ENCODE measurements at regions of chr1 and their contacts with region 1.

Region 1: GRCh38 chr1:37692078-37692833 is at the start of gene CDCA8:
- DNase-seq: peak; percentile 97 to 99 (median 98)
- ATAC-seq: peak; percentile 87
- H3K4me3 ChIP-seq: peak within 1 kb of the TSS; percentile 73
- H3K4me3 Mint-ChIP-seq: peak within 1 kb of the TSS; percentile 98
- H3K27ac ChIP-seq: peak within 1 kb of the TSS in 1 of 2 donors; percentile 46
- H3K27ac Mint-ChIP-seq: peak within 1 kb of the TSS; percentile 90
- H3K4me1 ChIP-seq: peaks cover 41% of the 10 kb centered on the region
- H3K4me1 Mint-ChIP-seq: peaks cover 37% of the 10 kb centered on the region
- H3K27me3 ChIP-seq: no peaks in the 10 kb centered on the region
- H3K27me3 Mint-ChIP-seq: no peaks in the 10 kb centered on the region
- CTCF ChIP-seq: peak; percentile 63
- total RNA-seq, gene CDCA8: 0.25 to 0.36 TPM

Region 2: DNA sequence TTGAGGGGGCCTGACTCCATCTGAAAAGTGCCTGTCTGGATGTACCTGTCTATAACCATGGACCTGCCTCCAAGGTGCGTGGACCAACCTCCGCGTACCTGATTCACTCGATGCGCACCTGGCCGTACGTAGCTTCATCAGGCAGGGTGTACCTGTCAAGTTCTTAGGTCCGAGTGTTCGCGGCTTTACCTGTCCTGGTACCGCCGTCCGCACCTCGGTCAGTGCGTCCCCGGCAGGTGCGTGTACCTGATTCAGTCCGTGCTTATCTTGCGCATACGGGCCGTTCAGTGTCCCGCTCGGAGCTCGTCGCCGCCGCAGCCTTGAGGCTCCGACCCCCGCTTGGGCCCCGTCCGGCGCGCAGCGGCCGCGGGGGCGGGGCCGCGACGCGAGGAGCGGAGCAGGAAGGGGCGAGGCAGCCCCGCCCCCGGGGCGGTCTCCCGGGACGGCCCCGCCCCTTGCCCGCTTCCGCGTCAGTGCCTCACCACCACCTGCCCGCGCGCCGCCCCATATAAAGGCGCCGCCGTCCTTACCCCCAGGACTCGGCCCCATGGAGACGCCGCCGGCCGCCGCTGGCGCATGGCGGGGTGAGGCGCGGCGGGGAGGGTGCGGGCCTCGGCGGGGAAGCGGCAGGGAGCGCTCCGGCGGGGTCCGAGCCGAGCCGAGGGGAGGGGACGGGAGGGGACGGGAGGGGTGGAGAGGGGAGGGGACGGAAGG is 218.1 kb before region 1 on chr1 and contains the start of gene ZC3H12A:
- CTCF ChIA-PET with region 1: no interaction called
- POLR2A ChIA-PET with region 1: interaction called, 7 read pairs
- intact Hi-C with region 1: loop called in 1 of 2 experiments (anchors 1 kb)
- DNase-seq: peak; percentile 83 to 98 (median 93)
- ATAC-seq: peak; percentile 61
- H3K4me3 ChIP-seq: peak within 1 kb of the TSS; percentile 92
- H3K4me3 Mint-ChIP-seq: peak within 1 kb of the TSS; percentile 97
- H3K27ac ChIP-seq: peak within 1 kb of the TSS; percentile 95 to 97
- H3K27ac Mint-ChIP-seq: peak within 1 kb of the TSS; percentile 100
- H3K4me1 ChIP-seq: peaks cover 69% of the 10 kb centered on the region
- H3K4me1 Mint-ChIP-seq: peaks cover 66% of the 10 kb centered on the region
- H3K27me3 ChIP-seq: no peaks in the 10 kb centered on the region
- H3K27me3 Mint-ChIP-seq: no peaks in the 10 kb centered on the region
- CTCF ChIP-seq: no peak
- total RNA-seq, gene ZC3H12A: 164 to 165 TPM

Region 3: DNA sequence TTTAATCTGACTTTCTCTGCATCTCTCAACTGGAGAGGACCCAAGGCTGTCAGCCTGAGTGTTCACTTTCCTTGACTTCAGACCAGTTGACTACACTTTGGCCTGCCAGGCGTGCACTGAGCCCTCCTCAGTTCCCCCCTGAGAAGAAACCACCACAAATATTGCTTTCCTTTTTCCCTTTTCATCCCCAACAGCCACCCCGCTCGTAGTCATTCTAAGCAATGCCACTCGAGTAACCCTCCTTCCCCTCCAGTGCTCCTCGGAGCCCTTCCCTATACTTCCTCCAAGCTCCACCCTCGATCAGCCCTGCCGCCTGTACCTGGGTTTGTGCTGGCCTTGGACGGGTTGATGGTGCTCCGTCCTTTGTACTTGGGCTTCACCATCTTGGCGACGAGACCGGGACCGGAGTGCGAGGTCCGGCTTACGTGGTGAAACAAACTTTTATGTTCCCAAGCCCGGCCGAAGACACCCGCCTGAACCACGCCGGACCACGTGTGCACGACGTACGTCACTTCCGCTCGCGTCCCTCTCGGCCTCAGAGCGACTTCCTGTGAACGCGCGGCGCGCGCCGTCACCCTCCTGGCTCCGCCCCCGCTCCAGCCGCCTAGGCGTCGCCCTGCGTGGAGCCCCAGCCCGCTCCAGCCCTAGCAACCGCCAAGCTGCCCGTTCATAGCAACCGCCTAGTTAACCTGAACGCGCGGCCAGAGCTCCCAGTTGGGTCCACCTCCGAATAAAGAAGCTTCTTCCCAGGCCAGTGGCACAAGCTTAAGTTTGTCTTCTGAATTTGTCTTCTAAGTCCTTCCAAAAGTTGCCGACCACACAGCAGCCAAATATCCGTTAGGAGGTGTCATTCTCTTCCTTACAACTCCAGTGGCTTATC is 96.6 kb before region 1 on chr1 and contains the start of gene GNL2:
- CTCF ChIA-PET with region 1: interaction called, 3 read pairs
- POLR2A ChIA-PET with region 1: interaction called, 12 read pairs
- intact Hi-C with region 1: no loop called
- DNase-seq: peak; percentile 88 to 99 (median 96)
- ATAC-seq: peak; percentile 93
- H3K4me3 ChIP-seq: peak within 1 kb of the TSS; percentile 93
- H3K4me3 Mint-ChIP-seq: peak within 1 kb of the TSS; percentile 97
- H3K27ac ChIP-seq: peak within 1 kb of the TSS; percentile 75 to 90
- H3K27ac Mint-ChIP-seq: peak within 1 kb of the TSS; percentile 93
- H3K4me1 ChIP-seq: peaks cover 22% of the 10 kb centered on the region
- H3K4me1 Mint-ChIP-seq: peaks cover 34% of the 10 kb centered on the region
- H3K27me3 ChIP-seq: no peaks in the 10 kb centered on the region
- H3K27me3 Mint-ChIP-seq: no peaks in the 10 kb centered on the region
- CTCF ChIP-seq: no peak
- total RNA-seq, gene GNL2: 43.4 to 44.5 TPM

Region 4: GRCh38 chr1:37931361-37932158 is 239.3 kb after region 1 on chr1:
- CTCF ChIA-PET with region 1: no interaction called
- POLR2A ChIA-PET with region 1: no interaction called
- intact Hi-C with region 1: loop called in 1 of 2 experiments (anchors 5 kb)
- DNase-seq: peak; percentile 90 to 99 (median 97)
- ATAC-seq: peak; percentile 99
- H3K4me3 ChIP-seq: peak overlapping the region; percentile 93
- H3K4me3 Mint-ChIP-seq: peak overlapping the region; percentile 97
- H3K27ac ChIP-seq: peak overlapping the region; percentile 15 to 46
- H3K27ac Mint-ChIP-seq: peak overlapping the region; percentile 77
- H3K4me1 ChIP-seq: peaks cover 32% of the 10 kb centered on the region
- H3K4me1 Mint-ChIP-seq: peaks cover 38% of the 10 kb centered on the region
- H3K27me3 ChIP-seq: no peaks in the 10 kb centered on the region
- H3K27me3 Mint-ChIP-seq: no peaks in the 10 kb centered on the region
- CTCF ChIP-seq: no peak

Region 5: GRCh38 chr1:38834937-38835827 is 1142.9 kb after region 1 on chr1:
- CTCF ChIA-PET with region 1: no interaction called
- POLR2A ChIA-PET with region 1: no interaction called
- intact Hi-C with region 1: loop called in 1 of 2 experiments (anchors 10 kb)
- DNase-seq: peak in 8 of 14 experiments; percentile 9 to 87 (median 46)
- ATAC-seq: peak; percentile 84
- H3K4me3 ChIP-seq: no peak overlapping the region
- H3K4me3 Mint-ChIP-seq: no peak overlapping the region
- H3K27ac ChIP-seq: no peak overlapping the region
- H3K27ac Mint-ChIP-seq: no peak overlapping the region
- H3K4me1 ChIP-seq: no peaks in the 10 kb centered on the region
- H3K4me1 Mint-ChIP-seq: peaks cover 7% of the 10 kb centered on the region
- H3K27me3 ChIP-seq: no peaks in the 10 kb centered on the region
- H3K27me3 Mint-ChIP-seq: peaks cover 8% of the 10 kb centered on the region
- CTCF ChIP-seq: peak; percentile 93

Measured in CD4-positive, alpha-beta T cell (primary cell).